ENCODE measurements at regions of chr11 and their contacts with region 1.

Region 1: GRCh38 chr11:110582728-110583432 is 129.4 kb downstream of the ARHGAP20 start:
- DNase-seq: no peak
- ATAC-seq: no peak
- H3K4me3 ChIP-seq: no peak overlapping the region
- H3K27ac ChIP-seq: no peak overlapping the region
- H3K4me1 ChIP-seq: no peaks in the 10 kb centered on the region
- H3K27me3 ChIP-seq: peaks cover 18% of the 10 kb centered on the region
- CTCF ChIP-seq: no peak

Region 2: GRCh38 chr11:110601936-110602335 is 19.1 kb after region 1 on chr11:
- CTCF ChIA-PET with region 1: no interaction called
- POLR2A ChIA-PET with region 1: interaction called, 10 read pairs
- in situ Hi-C with region 1: no loop called
- intact Hi-C with region 1: no loop called
- DNase-seq: no peak
- ATAC-seq: no peak
- H3K4me3 ChIP-seq: no peak overlapping the region
- H3K27ac ChIP-seq: no peak overlapping the region
- H3K4me1 ChIP-seq: no peaks in the 10 kb centered on the region
- H3K27me3 ChIP-seq: no peaks in the 10 kb centered on the region
- CTCF ChIP-seq: no peak

Region 3: GRCh38 chr11:110962921-110963320 is 380.0 kb after region 1 on chr11:
- CTCF ChIA-PET with region 1: no interaction called
- POLR2A ChIA-PET with region 1: no interaction called
- in situ Hi-C with region 1: no loop called
- intact Hi-C with region 1: no loop called
- DNase-seq: no peak
- ATAC-seq: no peak
- H3K4me3 ChIP-seq: no peak overlapping the region
- H3K27ac ChIP-seq: no peak overlapping the region
- H3K4me1 ChIP-seq: no peaks in the 10 kb centered on the region
- H3K27me3 ChIP-seq: no peaks in the 10 kb centered on the region; the same call in 1 of the 2 replicates
- CTCF ChIP-seq: no peak

Measured in Panc1 (cell line).